Left ventricle myocardium inferior (tissue), 1 donor: ENCODE measurements at regions of chr9 and their contacts with region 1.

Region 1: GRCh38 chr9:33852216-33852826 is 35.4 kb downstream of the UBE2R2 start:
- DNase-seq: peak; percentile 58
- H3K4me3 ChIP-seq: no peak overlapping the region
- H3K27ac ChIP-seq: peak overlapping the region; percentile 72
- H3K4me1 ChIP-seq: peaks cover 78% of the 10 kb centered on the region
- H3K27me3 ChIP-seq: no peaks in the 10 kb centered on the region
- CTCF ChIP-seq: peak; percentile 73

Region 2: DNA sequence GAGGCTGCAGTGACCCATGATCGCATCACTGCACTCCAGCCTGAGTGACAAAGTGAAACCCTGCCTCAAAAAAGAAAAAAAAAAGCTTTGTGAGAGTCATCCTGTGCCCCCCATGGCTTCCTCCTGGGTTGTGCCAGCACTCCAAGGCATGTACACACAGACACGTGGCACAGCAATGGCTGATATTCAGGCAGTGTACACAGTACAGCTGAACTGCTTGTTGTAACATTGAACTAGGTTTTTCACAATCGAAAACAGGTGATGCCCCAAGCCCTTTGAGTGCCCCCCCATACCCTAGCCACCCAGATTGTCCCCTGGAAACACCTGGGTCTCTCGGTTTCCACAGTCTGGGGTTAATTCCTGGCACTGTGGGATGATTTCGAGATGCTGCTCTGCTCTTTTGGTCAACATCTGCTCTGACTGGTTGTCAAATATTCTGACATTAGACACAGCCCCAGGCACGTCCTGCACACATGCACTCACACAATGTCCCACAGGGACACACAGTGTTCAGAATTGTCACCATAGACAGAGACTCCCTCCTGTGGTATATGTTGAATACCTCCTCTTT is 603.1 kb before region 1 on chr9:
- intact Hi-C with region 1: no loop called
- DNase-seq: no peak
- H3K4me3 ChIP-seq: no peak overlapping the region
- H3K27ac ChIP-seq: no peak overlapping the region
- H3K4me1 ChIP-seq: no peaks in the 10 kb centered on the region
- H3K27me3 ChIP-seq: no peaks in the 10 kb centered on the region
- CTCF ChIP-seq: no peak

Region 3: GRCh38 chr9:33813712-33814641 is 38.3 kb before region 1 on chr9:
- intact Hi-C with region 1: loop called (anchors 2 kb)
- DNase-seq: no peak
- H3K4me3 ChIP-seq: no peak overlapping the region
- H3K27ac ChIP-seq: peak overlapping the region; percentile 99
- H3K4me1 ChIP-seq: peaks cover 52% of the 10 kb centered on the region
- H3K27me3 ChIP-seq: no peaks in the 10 kb centered on the region
- CTCF ChIP-seq: peak; percentile 81

Region 4: GRCh38 chr9:34106110-34106509 is 253.8 kb after region 1 on chr9:
- intact Hi-C with region 1: no loop called
- DNase-seq: no peak
- H3K4me3 ChIP-seq: no peak overlapping the region
- H3K27ac ChIP-seq: no peak overlapping the region
- H3K4me1 ChIP-seq: peaks cover 21% of the 10 kb centered on the region
- H3K27me3 ChIP-seq: no peaks in the 10 kb centered on the region
- CTCF ChIP-seq: no peak